ENCODE measurements at regions of chr2 and their contacts with region 1.

Region 1: DNA sequence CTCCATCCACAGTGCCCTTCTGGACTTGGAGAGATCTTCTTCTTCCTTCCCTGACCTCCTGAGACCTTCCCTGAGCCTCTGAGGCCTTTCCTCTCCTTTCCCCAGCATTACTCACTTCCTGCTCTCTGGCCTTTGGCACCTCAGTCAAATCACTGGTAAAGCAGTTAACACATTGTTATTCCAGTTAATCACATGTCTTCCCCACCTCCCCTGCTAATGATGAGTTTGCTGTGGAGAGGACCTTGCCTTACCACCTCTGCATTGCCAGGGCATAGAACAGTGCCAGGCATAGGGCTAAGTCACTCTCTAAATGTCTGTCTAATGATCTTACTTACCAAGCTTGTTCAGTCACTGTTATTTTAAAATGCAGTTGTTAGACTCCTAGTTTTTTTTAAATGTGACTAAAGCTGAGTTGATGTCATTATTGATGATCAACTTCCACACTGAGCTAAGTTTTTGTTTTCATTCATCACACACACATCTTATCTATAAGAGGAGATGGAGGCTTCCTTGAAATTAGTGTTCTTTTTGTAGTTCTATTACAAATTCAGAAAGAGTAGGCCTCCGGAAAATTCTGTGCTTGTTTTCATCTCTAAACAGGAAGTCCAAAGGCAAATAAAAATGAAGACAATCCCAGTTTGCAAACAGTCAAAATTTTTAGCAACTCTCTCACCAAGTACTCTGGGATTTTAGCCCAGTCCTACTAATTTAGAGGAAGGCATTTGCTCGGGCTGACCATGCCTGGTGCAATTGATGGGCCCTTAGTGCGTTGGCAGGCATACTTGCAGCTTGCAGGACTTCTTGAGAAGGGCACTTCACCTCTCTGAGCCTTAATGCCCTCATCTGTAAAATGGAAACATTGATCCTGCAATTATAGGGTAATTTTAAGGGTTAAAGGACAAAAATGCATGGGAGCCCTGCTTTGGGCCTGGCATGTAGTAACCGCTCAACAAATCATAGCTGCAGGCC is 113.7 kb upstream of the SPRED2 start:
- ATAC-seq: peak in 2 of 8 experiments; percentile 30 to 71
- H3K4me3 ChIP-seq: no peak overlapping the region
- H3K27ac ChIP-seq: no peak overlapping the region
- H3K4me1 ChIP-seq: peaks cover 0 to 6% of the 10 kb centered on the region in 2 donors

Region 2: GRCh38 chr2:65264821-65265670 is 281.1 kb before region 1 on chr2:
- in situ Hi-C with region 1: loop called in 4 of 9 experiments (anchors 10 to 25 kb)
- ATAC-seq: peak; percentile 22 to 87 (median 50)
- H3K4me3 ChIP-seq: no peak overlapping the region
- H3K27ac ChIP-seq: no peak overlapping the region
- H3K4me1 ChIP-seq: no peaks in the 10 kb centered on the region